WTC11 (cell line): ENCODE measurements at regions of chr16 and their contacts with region 1.

Region 1: GRCh38 chr16:89615596-89616090 is 2.2 kb downstream of the DPEP1 start:
- DNase-seq: peak; percentile 79
- ATAC-seq: peak; percentile 69
- H3K4me3 Mint-ChIP-seq: no peak overlapping the region
- H3K27ac Mint-ChIP-seq: no peak overlapping the region
- H3K4me1 Mint-ChIP-seq: peaks cover 17% of the 10 kb centered on the region
- H3K27me3 Mint-ChIP-seq: no peaks in the 10 kb centered on the region
- CTCF ChIP-seq: peak; percentile 86

Region 2: GRCh38 chr16:89565506-89566372 is 49.9 kb before region 1 on chr16:
- CTCF ChIA-PET with region 1: interaction called, 19 read pairs
- POLR2A ChIA-PET with region 1: no interaction called
- DNase-seq: peak; percentile 77
- ATAC-seq: peak; percentile 40
- H3K4me3 Mint-ChIP-seq: peak overlapping the region; percentile 99
- H3K27ac Mint-ChIP-seq: peak overlapping the region; percentile 96
- H3K4me1 Mint-ChIP-seq: peaks cover 48% of the 10 kb centered on the region
- H3K27me3 Mint-ChIP-seq: no peaks in the 10 kb centered on the region
- CTCF ChIP-seq: peak; percentile 85

Region 3: GRCh38 chr16:89602273-89602951 is 13.2 kb before region 1 on chr16:
- CTCF ChIA-PET with region 1: interaction called, 79 read pairs
- POLR2A ChIA-PET with region 1: interaction called, 3 read pairs
- DNase-seq: peak; percentile 51
- ATAC-seq: peak; percentile 46
- H3K4me3 Mint-ChIP-seq: no peak overlapping the region
- H3K27ac Mint-ChIP-seq: no peak overlapping the region
- H3K4me1 Mint-ChIP-seq: peaks cover 13% of the 10 kb centered on the region
- H3K27me3 Mint-ChIP-seq: no peaks in the 10 kb centered on the region
- CTCF ChIP-seq: no peak

Region 4: DNA sequence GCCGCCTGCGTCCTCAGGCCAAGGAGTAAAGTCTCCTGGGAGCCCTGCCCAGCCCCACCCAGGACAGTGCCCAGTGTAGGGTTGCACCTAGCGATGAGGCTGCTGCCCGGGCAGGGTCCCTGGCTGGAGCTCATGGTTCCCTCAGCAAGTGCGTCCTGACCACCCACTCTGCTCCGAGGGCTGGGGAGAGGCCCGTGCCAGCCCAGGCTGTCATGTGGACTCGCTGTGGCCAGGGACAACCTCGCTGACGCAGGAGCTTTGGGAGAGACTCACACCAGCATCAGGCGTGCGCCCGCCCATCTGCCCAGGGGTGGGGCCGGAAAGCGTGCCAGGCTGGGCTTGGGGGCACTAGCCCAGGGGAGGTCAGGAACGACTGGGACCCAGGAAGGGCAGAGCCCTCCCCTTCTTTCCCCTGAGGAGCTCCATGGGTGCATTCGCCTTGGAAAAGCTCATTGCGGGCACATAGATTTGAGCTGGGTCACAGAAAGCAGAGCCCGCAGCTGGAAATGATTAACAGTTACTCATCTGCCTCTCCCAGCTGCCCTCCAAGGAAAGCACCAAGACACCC is 17.5 kb after region 1 on chr16:
- CTCF ChIA-PET with region 1: interaction called, 30 read pairs
- POLR2A ChIA-PET with region 1: interaction called, 3 read pairs
- DNase-seq: no peak
- ATAC-seq: no peak
- H3K4me3 Mint-ChIP-seq: no peak overlapping the region
- H3K27ac Mint-ChIP-seq: no peak overlapping the region
- H3K4me1 Mint-ChIP-seq: no peaks in the 10 kb centered on the region
- H3K27me3 Mint-ChIP-seq: peaks cover 15% of the 10 kb centered on the region
- CTCF ChIP-seq: no peak

Region 5: DNA sequence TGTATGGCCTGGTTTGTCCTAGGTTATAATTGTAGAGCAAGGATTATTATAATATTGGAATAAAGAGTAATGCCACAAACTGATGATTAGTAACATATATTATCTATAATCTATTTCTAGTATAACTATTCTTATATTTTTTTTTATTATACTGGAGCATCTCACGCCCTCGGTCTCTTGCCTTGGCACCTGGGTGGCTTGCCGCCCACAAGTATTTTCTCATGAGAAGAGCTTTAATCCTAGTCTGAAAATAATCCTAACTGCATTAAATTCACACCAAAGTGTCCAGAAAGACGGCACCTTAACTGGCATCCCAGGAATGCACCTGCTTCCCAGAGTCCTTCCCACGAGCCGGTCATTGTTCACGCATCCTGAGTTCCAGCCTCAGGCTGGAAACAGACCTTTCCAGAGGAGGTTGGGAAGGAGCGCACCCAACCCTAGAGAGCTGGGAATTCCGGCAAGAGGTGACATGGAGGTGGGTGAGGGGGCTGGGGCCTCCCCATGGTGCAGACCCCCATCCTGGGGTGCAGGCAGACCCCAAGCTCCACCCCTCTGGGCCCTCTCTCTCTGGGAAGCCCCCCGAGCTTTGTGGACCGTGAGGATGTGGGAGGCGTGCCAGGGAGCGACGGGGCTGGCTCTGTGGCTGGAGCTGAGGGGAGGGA is 25.9 kb after region 1 on chr16:
- CTCF ChIA-PET with region 1: interaction called, 45 read pairs
- POLR2A ChIA-PET with region 1: no interaction called
- DNase-seq: no peak
- ATAC-seq: no peak
- H3K4me3 Mint-ChIP-seq: no peak overlapping the region
- H3K27ac Mint-ChIP-seq: no peak overlapping the region
- H3K4me1 Mint-ChIP-seq: peaks cover 7% of the 10 kb centered on the region
- H3K27me3 Mint-ChIP-seq: no peaks in the 10 kb centered on the region
- CTCF ChIP-seq: no peak; the same call in 1 of the 2 replicates

Region 6: DNA sequence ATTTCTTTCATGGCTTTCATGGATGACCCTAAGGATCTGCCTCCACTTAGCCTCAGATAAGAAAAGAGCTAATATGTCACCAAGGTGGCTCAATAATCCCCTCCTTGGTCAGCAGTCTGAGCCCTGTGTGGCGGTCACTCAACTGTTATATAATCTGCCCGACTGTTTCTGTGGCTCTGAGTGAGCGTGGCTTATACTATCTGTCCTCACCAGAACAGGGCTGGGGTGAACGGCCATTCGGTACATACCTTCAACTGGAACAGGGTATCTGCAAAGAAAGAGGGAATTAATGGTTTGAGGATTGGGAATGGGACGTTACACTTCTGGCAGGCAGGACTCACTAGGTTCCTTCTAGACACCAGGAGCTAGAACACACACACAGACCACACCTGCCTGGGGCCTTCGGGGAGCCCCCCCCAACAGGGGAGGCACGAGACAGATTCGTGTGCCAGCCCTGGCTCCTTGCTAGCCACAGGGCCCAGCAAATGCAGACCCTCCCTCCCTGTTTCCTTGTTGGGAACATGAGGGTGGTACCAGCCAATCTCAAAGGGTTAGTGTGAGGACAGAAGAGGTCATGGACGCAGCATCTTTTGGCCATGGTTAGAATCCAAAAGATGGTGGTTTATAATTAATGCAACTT is 38.1 kb after region 1 on chr16:
- CTCF ChIA-PET with region 1: interaction called, 11 read pairs
- POLR2A ChIA-PET with region 1: no interaction called
- DNase-seq: no peak
- ATAC-seq: no peak
- H3K4me3 Mint-ChIP-seq: no peak overlapping the region
- H3K27ac Mint-ChIP-seq: no peak overlapping the region
- H3K4me1 Mint-ChIP-seq: peaks cover 5% of the 10 kb centered on the region
- H3K27me3 Mint-ChIP-seq: no peaks in the 10 kb centered on the region
- CTCF ChIP-seq: no peak